ENCODE measurements at regions of chr2 and their contacts with region 1.

Region 1: GRCh38 chr2:10434886-10435819 is 13.0 kb downstream of the ODC1 start:
- DNase-seq: peak in 34 of 35 experiments; percentile 23 to 86 (median 59)
- ATAC-seq: peak; percentile 64 to 72 (median 66)
- H3K4me3 ChIP-seq: no peak overlapping the region
- H3K4me3 Mint-ChIP-seq: no peak overlapping the region
- H3K27ac ChIP-seq: no peak overlapping the region
- H3K27ac Mint-ChIP-seq: no peak overlapping the region
- H3K4me1 ChIP-seq: peaks cover 0 to 22% of the 10 kb centered on the region in 2 experiments
- H3K4me1 Mint-ChIP-seq: peaks cover 11 to 18% (median 14%) of the 10 kb centered on the region in 3 donors
- H3K27me3 ChIP-seq: peaks cover 0 to 30% of the 10 kb centered on the region in 2 experiments
- H3K27me3 Mint-ChIP-seq: peaks cover 3 to 4% of the 10 kb centered on the region in 2 donors

Region 2: GRCh38 chr2:10120158-10120886 is 314.8 kb before region 1 on chr2:
- CTCF ChIA-PET with region 1: interaction called, 5 to 38 read pairs
- POLR2A ChIA-PET with region 1: no interaction called
- DNase-seq: peak; percentile 81 to 95 (median 89)
- ATAC-seq: peak; percentile 85 to 87 (median 86)
- H3K4me3 ChIP-seq: peak overlapping the region; percentile 45 to 79
- H3K4me3 Mint-ChIP-seq: peak overlapping the region; percentile 88 to 97 (median 88)
- H3K27ac ChIP-seq: peak overlapping the region; percentile 58
- H3K27ac Mint-ChIP-seq: peak overlapping the region; percentile 92 to 94
- H3K4me1 ChIP-seq: peaks cover 17 to 49% of the 10 kb centered on the region in 2 experiments
- H3K4me1 Mint-ChIP-seq: peaks cover 34 to 47% (median 41%) of the 10 kb centered on the region in 3 donors
- H3K27me3 ChIP-seq: peaks cover 0 to 16% of the 10 kb centered on the region in 2 experiments
- H3K27me3 Mint-ChIP-seq: peaks cover 13 to 14% of the 10 kb centered on the region in 2 donors

Region 3: DNA sequence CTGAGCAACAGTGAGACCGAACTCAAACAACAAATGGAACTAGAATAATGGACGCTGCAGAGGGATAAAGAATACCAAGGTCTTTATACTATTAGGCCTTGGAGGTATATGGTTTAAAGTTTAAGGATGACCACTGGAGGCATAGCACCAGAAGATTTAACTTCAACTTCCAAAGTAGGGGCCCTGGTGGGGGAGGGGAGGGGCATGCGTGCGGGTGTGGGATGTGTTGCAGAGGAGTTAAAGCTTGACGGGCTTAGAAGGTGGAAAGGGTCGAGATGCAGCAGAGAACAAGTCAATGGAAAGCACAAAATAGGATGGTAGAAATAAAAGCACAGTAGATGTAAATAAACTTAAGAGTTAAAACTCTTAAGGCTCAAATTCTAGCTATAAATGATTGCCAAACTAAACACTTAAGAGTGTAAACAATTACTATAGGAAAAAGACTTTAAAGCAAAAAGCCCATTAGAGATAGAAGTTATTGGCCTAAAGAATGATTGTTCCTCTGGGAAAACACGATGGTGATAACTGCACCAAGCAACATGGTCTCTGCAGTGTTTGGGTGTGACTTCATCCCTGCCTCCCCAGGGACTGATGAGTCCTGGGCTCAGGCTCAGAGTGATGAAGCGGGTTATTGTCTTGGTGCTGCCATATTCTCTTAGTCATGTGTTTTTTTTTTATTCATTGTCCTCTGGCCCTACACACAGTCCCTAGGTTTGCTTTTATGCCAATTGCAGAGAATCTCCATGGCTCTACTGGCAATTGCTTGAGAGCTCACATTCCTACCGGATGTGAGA is 299.7 kb before region 1 on chr2:
- CTCF ChIA-PET with region 1: interaction called in 1 of 2 experiments, 6 read pairs
- POLR2A ChIA-PET with region 1: interaction called in 1 of 2 experiments, 10 read pairs
- DNase-seq: no peak
- ATAC-seq: no peak
- H3K4me3 ChIP-seq: no peak overlapping the region
- H3K4me3 Mint-ChIP-seq: no peak overlapping the region
- H3K27ac ChIP-seq: no peak overlapping the region
- H3K27ac Mint-ChIP-seq: no peak overlapping the region
- H3K4me1 ChIP-seq: no peaks in the 10 kb centered on the region
- H3K4me1 Mint-ChIP-seq: peaks cover 2 to 7% (median 6%) of the 10 kb centered on the region in 3 donors
- H3K27me3 ChIP-seq: no peaks in the 10 kb centered on the region
- H3K27me3 Mint-ChIP-seq: no peaks in the 10 kb centered on the region

Region 4: DNA sequence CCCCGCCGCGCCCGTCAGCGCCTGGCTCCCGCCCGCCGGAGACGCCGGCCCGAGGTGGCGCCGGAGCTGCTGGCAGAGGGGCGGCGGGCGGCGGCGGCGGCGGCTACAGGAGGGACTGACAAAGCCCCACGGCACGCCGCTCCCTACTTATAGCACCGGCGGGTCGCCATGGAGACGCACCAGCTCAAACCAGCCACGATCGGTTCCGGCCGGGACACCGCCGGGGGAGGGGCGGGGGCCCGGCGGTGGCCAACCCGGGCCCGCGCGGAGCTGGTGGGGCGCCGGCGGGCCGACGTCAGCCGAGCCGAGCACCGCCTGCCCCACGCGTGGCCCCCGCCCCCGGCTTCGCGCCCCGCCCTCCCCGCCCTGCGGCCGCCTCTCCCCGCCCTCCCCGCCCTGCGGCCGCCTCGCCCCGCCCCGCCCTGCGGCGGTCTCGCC is 13.1 kb after region 1 on chr2 and contains the start of gene ODC1:
- CTCF ChIA-PET with region 1: interaction called, 4 to 22 read pairs
- POLR2A ChIA-PET with region 1: interaction called in 1 of 2 experiments, 6 read pairs
- DNase-seq: peak; percentile 91 to 99 (median 95)
- ATAC-seq: peak; percentile 86 to 91 (median 87)
- H3K4me3 ChIP-seq: peak within 1 kb of the TSS; percentile 60 to 64
- H3K4me3 Mint-ChIP-seq: peak within 1 kb of the TSS; percentile 79 to 85 (median 81)
- H3K27ac ChIP-seq: peak within 1 kb of the TSS; percentile 96
- H3K27ac Mint-ChIP-seq: peak within 1 kb of the TSS; percentile 81 to 86
- H3K4me1 ChIP-seq: peaks cover 6 to 33% of the 10 kb centered on the region in 2 experiments
- H3K4me1 Mint-ChIP-seq: peaks cover 16 to 41% (median 41%) of the 10 kb centered on the region in 3 donors
- H3K27me3 ChIP-seq: no peaks in the 10 kb centered on the region
- H3K27me3 Mint-ChIP-seq: no peaks in the 10 kb centered on the region
- total RNA-seq, gene ODC1: 40.6 to 102 (median 53.3) TPM